ENCODE measurements at regions of chr2 and their contacts with region 1.

Region 1: DNA sequence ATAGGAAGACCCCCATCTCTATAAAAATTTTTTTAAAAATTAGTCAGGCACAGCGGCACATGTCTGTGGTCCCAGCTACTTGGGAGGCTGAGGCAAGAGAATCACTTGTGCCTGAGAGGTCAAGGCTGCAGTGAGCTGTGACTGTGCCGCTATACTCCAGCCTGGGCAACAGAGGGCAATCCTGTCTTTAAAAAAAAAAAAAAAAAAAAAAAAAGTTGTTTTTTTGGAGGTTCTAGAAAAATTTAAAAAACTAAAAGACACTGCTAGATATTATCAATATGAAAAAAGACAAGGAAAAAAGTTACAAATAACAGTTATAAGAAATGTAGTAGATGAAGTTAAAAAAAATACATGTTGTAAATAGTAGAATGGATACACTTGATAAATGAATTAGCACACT is 56.1 kb upstream of the C2orf15 start:
- DNase-seq: no peak
- H3K4me3 Mint-ChIP-seq: no peak overlapping the region
- H3K27ac Mint-ChIP-seq: no peak overlapping the region
- H3K4me1 Mint-ChIP-seq: peaks cover 4% of the 10 kb centered on the region
- H3K27me3 Mint-ChIP-seq: peaks cover 44% of the 10 kb centered on the region

Region 2: DNA sequence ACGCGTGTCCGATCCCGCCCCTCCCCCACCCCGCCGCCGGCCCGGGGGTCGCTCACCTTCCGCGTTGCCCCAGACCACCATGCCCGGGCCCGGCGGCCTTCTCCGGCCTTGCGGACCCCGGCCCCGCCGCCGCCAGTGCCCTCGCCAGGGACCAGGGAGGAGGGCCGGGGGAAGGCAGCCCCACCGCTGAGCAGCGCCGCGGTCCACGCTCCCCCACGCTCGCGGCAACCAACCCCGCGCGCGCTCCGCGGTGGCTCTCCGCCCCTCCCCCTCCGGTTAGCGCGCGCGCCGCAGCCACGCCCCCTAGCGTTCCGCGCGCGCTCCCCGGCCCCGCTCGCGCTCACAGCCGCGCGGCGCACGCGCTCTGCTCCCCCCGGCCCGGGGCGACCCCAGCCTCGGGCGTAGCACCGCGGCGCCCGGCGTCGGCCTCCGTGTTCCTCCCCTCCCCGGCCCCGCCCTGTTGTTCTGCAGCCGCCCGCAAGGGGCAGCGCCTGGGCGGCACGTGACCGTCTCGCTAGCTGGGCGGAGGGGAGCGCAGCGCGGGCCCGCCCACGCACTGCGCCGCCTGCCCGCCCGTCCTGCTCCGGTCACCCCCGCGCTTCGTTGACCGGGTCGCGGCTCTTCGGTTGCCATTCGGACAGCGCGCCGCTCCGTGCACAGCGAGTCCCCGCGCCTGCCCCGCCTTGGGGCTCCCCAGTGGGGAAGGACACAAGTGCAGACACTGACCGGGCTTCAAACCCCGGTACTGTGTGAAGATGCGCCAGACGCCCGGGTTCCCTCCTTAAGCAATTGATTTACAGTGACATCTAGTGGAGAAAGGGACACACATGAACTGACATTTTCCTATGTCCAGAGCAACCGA is 404.6 kb after region 1 on chr2 and contains the start of gene REV1:
- intact Hi-C with region 1: loop called (anchors 10 kb)
- DNase-seq: peak; percentile 89
- H3K4me3 Mint-ChIP-seq: peak within 1 kb of the TSS; percentile 100
- H3K27ac Mint-ChIP-seq: peak within 1 kb of the TSS; percentile 97
- H3K4me1 Mint-ChIP-seq: peaks cover 31% of the 10 kb centered on the region
- H3K27me3 Mint-ChIP-seq: peaks cover 2% of the 10 kb centered on the region
- total RNA-seq, gene REV1: 39.4 and 41.3 TPM in 2 replicates

Measured in activated T-helper 2 cell treated with anti-CD3 and anti-CD28 coated beads, Interferon-gamma antibody, Interleukin-2, Interleukin-4, amounts not matched to agents 10 μg/mL and 5 μg/mL and 100 μg/mL, durations not matched to agents 14 hours and 24 hours and 36 hours (primary cell).